HEK293 (cell line): ENCODE measurements at regions of chr1 and their contacts with region 1.

Region 1: GRCh38 chr1:147890177-147890790 is 12.3 kb upstream of the GJA8 start:
- H3K4me3 ChIP-seq: no peak overlapping the region
- H3K27ac ChIP-seq: no peak overlapping the region
- H3K4me1 ChIP-seq: no peaks in the 10 kb centered on the region
- CTCF ChIP-seq: peak; percentile 82

Region 2: DNA sequence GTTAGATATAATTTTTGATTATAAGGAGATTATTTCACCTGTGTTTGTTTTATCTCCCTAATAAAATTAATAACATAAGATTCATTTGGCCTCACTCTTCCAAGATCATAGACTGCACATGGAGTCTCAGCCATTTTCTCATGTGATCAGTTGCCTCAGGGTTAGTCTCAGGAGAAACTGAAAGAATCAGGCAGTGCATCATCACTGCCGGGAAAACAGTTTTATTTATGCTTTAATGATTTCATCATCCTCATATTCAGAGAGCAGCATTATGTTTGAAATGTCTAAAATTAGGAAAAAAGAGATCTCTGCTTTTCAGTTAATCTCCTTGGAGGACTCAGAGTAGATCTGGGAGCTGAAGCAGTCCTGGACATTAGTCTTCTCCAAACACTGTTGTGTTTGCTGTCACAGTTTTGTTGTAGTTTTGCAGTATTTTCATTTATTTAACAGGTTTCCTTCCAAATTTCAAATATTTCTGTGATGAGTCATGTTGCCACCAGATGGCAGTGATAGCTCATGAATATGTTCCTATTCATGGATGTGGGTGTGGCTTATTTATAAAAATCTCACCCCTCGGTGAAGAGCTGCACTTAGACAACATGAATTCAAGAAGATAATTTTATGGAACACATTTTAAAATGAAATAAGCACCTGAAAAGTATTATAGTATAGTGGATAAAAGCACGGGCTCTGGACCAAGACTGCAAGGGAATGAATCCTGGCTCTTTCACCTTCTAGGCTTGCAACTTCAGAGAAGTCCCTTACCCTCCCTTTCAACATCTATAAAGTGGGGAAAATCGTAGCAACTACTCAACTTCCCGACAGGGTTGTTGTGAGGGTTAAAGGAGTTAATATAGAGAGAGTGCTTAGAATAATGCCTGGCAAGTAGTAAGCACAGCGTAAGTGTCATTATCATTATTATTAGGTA is 616.6 kb before region 1 on chr1:
- CTCF ChIA-PET with region 1: interaction called, 10 read pairs
- POLR2A ChIA-PET with region 1: no interaction called
- H3K4me3 ChIP-seq: no peak overlapping the region
- H3K27ac ChIP-seq: no peak overlapping the region
- H3K4me1 ChIP-seq: no peaks in the 10 kb centered on the region
- CTCF ChIP-seq: peak; percentile 40; the same call in 1 of the 2 replicates

Region 3: DNA sequence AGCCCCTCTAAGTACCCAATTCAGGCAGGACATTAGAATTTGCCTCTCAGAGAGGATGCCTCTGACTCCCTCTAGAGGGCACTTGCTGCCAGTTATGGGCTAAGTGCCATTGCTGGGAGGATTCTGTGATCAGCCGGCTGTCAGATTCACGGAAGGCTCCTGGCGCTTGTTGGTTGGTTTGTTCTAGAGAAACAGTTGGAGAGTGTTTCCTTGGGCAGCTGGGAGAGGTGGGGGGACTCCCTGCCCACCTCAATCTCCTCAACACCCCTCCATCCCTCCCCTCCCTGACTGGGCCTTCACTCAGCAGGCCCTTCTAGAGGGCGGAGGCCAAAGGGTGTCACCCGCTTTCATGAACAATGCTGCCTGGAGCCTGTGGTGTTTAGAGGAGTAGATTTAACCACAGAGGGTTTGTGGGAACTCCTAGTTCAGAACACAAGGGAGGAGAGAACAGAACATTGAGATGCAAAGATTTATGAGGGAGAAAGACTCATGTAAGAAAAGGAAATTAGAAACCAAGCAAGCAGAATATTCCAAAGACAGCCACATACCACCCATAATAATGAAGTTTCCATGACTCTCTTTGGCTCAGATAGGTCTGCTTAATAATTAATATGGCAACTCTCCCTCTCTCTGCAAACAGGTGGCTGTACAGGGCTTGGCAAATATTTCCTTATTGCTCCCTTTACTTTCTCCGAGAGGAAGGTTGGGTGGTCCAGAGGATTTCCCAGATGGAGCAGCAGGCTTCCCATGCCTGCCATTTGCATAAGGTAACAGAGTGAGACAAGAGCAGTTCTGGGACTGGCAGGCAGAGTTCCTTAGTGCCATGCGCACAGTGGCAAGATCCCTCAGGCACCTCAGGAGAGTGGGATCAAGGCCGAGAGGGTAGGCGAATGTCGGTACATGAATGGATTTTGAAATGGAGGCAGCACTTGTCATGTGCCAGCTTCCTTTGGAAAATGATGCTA is 190.0 kb before region 1 on chr1:
- CTCF ChIA-PET with region 1: interaction called, 12 read pairs
- POLR2A ChIA-PET with region 1: no interaction called
- H3K4me3 ChIP-seq: no peak overlapping the region
- H3K27ac ChIP-seq: no peak overlapping the region
- H3K4me1 ChIP-seq: no peaks in the 10 kb centered on the region
- CTCF ChIP-seq: peak; percentile 57; the same call in 1 of the 2 replicates

Region 4: DNA sequence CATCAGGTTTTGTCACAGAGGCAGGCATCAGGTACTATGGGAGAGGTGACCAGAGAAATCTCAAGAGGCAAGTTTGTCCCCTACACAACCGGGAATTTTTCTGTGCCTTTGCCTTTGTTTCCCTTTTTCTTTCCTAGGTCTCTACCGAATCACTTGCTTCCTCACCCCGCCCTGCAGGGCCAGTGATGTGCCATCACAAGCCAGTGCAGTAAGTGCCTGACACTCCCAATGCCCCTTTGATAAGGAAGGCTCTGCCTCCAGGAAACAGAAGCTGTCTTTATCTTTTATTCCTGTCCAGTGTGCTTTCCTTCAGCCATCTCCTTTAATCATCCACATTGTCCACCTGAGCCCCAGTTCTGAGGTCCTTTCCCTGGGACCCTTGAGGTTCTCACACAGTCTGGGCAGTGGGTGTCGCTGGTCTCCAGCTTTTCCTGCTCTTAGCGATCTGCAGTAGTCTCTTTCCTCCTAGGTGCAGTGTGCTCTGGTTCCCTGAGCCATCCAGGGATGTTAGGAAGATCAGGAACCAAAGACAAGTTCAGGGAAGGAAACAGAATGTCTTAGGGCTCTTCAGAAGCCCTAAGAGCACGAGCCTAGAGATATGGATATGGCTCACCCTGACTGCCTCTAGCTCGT is 166.5 kb before region 1 on chr1:
- CTCF ChIA-PET with region 1: interaction called, 71 read pairs
- POLR2A ChIA-PET with region 1: no interaction called
- H3K4me3 ChIP-seq: no peak overlapping the region
- H3K27ac ChIP-seq: no peak overlapping the region
- H3K4me1 ChIP-seq: no peaks in the 10 kb centered on the region
- CTCF ChIP-seq: peak; percentile 81

Region 5: GRCh38 chr1:147762233-147763024 is 127.9 kb before region 1 on chr1:
- CTCF ChIA-PET with region 1: no interaction called
- POLR2A ChIA-PET with region 1: no interaction called
- H3K4me3 ChIP-seq: no peak overlapping the region
- H3K27ac ChIP-seq: no peak overlapping the region
- H3K4me1 ChIP-seq: no peaks in the 10 kb centered on the region
- CTCF ChIP-seq: no peak

Region 6: GRCh38 chr1:147902183-147902845 is 12.0 kb after region 1 on chr1 and contains the start of gene GJA8:
- CTCF ChIA-PET with region 1: interaction called, 15 read pairs
- POLR2A ChIA-PET with region 1: interaction called, 3 read pairs
- H3K4me3 ChIP-seq: no peak within 1 kb of the TSS
- H3K27ac ChIP-seq: no peak within 1 kb of the TSS
- H3K4me1 ChIP-seq: no peaks in the 10 kb centered on the region
- CTCF ChIP-seq: no peak